ENCODE measurements at regions of chr6 and their contacts with region 1.

Region 1: DNA sequence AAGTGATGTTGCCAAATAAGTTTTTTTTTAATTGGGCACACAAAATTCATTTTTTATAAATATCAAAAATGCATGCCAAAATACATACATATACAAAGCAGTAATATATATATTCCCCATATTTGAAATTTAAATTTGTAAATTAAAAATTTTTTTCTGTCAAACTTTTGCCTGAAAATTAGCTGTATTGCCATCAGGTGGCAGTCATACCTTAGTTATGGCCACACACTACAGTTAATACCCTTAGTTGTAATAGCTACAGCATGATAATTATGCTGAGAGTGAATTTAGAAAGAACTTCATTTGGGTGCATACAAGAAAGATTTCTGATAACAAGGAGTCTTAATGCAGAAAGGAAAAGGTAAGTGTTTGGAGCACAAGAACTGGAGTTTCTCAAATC is 46.2 kb upstream of the SDHAF4 start:
- DNase-seq: no peak
- ATAC-seq: no peak
- H3K4me3 ChIP-seq: no peak overlapping the region
- H3K27ac ChIP-seq: no peak overlapping the region
- H3K4me1 ChIP-seq: no peaks in the 10 kb centered on the region
- H3K27me3 ChIP-seq: no peaks in the 10 kb centered on the region
- CTCF ChIP-seq: peak; percentile 23

Region 2: DNA sequence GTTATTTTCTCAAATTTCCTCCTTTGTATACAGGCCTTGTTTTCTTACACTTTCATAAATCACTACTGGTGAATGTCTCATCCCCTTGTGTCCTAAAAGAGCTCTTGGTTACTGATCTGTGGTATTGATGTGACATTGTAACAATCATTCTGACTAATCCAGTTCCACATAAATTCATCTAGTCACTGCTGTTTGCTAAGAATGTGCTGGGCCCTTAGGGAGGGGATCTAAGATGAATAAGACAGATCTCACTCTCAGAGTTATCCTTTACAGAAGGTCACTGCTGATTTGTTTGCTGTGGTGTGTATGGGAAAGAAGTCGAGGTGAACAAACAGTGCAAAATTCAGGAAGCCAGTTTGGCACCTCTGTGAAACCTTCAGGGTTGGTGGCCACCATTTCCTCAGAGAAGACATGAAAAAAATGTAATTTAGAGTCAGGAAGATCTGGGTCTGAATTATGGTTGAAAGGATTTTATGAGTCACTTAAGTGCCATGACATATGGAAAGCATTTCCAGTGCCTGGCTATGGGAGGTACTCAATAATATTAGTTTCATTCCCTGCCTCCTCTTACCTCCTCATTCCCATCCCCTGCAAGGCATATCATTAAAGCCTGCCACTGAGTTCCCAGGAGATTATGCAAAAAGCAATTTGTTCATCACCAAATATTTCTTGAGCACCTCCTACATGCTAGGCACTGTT is 339.5 kb before region 1 on chr6:
- intact Hi-C with region 1: no loop called
- DNase-seq: no peak
- ATAC-seq: no peak
- H3K4me3 ChIP-seq: no peak overlapping the region
- H3K27ac ChIP-seq: no peak overlapping the region
- H3K4me1 ChIP-seq: no peaks in the 10 kb centered on the region
- H3K27me3 ChIP-seq: no peaks in the 10 kb centered on the region
- CTCF ChIP-seq: no peak

Region 3: GRCh38 chr6:70479236-70479635 is 41.3 kb before region 1 on chr6:
- intact Hi-C with region 1: no loop called
- DNase-seq: no peak
- ATAC-seq: peak in 1 of 4 donors; percentile 45
- H3K4me3 ChIP-seq: no peak overlapping the region
- H3K27ac ChIP-seq: no peak overlapping the region
- H3K4me1 ChIP-seq: no peaks in the 10 kb centered on the region
- H3K27me3 ChIP-seq: no peaks in the 10 kb centered on the region
- CTCF ChIP-seq: no peak

Region 4: DNA sequence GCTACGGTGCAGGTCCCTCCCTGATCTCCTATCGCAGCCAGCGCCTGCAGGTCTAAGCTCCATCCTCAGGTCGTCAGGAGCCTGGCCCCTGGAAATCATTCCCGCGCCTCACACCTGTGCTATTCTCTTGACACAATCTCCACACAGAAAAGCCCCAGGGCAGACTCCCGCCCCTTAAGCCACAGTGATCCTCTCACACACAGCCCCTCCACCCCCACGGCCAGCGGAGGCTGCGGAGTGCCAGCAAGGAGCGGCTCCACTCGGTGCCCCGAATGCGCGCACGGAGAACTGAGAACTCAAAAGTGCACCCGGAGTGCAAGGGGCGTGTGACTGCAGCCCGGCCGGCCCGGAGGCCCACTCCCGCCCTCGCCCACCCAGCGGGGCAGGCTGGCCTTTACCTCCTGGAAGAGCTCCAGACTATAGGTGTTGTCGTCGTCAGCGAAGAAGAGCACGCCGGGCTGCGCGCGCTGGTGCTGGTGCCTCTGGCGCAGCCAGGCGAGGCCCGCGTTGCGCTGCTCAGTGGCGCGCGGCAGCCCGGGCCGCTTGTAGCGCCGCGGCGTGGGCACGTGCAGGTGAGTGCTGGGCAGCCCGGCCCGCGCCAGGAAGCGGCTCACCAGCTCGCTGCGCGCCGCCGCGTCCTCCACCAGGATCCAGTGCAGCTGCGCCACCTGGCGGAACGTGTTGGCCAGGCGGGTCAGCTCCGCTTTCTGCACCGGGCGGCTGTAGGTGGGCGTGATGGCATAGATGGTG is 435.0 kb after region 1 on chr6:
- intact Hi-C with region 1: loop called in 1 of 2 experiments (anchors 5 kb)
- DNase-seq: peak; percentile 84 to 90
- ATAC-seq: peak; percentile 95 to 98 (median 97)
- H3K4me3 ChIP-seq: peak overlapping the region; percentile 72
- H3K27ac ChIP-seq: no peak overlapping the region
- H3K4me1 ChIP-seq: no peaks in the 10 kb centered on the region
- H3K27me3 ChIP-seq: peaks cover 0 to 44% (median 13%) of the 10 kb centered on the region in 3 donors
- CTCF ChIP-seq: peak; percentile 88